Stomach (tissue), 19 donors: ENCODE measurements at regions of chr2 and their contacts with region 1.

Region 1: DNA sequence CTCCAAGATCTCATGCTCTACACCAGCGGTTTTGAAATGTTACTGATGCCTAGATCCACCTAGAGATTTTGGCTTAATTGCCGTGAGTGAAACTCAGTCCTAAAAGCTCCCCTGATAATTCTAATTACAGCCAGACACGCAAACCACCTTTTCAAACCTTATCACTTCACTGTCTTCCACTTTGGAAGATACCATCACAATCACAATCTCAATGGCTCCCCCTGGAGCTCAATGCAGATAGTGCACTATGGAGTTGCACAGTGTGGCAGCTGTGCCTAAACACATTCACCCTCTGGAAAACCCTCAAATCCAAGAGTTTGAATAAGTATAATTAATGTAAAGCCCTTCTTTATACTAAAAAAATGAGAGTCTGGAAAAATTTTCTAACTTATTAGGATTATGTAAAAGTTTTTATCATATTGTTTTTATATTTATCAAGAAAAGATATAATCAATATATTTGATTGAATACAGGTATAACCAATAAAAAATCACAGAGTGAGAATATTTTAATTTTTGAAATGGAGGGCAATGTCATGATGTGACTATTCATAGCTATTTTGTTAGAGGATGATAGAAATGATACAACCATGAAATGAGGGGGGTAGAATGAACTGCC is 102.9 kb upstream of the SLC8A1 start:
- DNase-seq: peak; percentile 67 to 68
- H3K4me3 ChIP-seq: no peak overlapping the region
- H3K27ac ChIP-seq: no peak overlapping the region
- H3K4me1 ChIP-seq: no peaks in the 10 kb centered on the region
- H3K27me3 ChIP-seq: no peaks in the 10 kb centered on the region
- CTCF ChIP-seq: peak in 5 of 7 experiments; percentile 70 to 90 (median 86)
- EP300 ChIP-seq: no peak
- POLR2A ChIP-seq: no peak

Region 2: GRCh38 chr2:39919511-39920306 is 635.1 kb before region 1 on chr2:
- intact Hi-C with region 1: loop called (anchors 5 kb)
- DNase-seq: no peak
- H3K4me3 ChIP-seq: no peak overlapping the region
- H3K27ac ChIP-seq: no peak overlapping the region
- H3K4me1 ChIP-seq: peaks cover 0 to 4% (median 0%) of the 10 kb centered on the region in 4 donors
- H3K27me3 ChIP-seq: no peaks in the 10 kb centered on the region
- CTCF ChIP-seq: no peak
- EP300 ChIP-seq: no peak
- POLR2A ChIP-seq: no peak